RWPE1 (cell line): ENCODE measurements at regions of chr9 and their contacts with region 1.

Region 1: GRCh38 chr9:134778841-134779411 is 101.7 kb upstream of the FCN2 start:
- DNase-seq: peak; percentile 73
- H3K27ac ChIP-seq: peak overlapping the region; percentile 66
- CTCF ChIP-seq: peak; percentile 83

Region 2: GRCh38 chr9:134764473-134765269 is 14.3 kb before region 1 on chr9:
- CTCF ChIA-PET with region 1: interaction called, 12 read pairs
- POLR2A ChIA-PET with region 1: no interaction called
- DNase-seq: peak; percentile 36
- H3K27ac ChIP-seq: no peak overlapping the region
- CTCF ChIP-seq: no peak